HCT116 (cell line): ENCODE measurements at regions of chr3 and their contacts with region 1.

Region 1: GRCh38 chr3:195271116-195271858 is at the start of gene XXYLT1:
- DNase-seq: peak; percentile 74
- ATAC-seq: peak; percentile 81
- H3K4me3 ChIP-seq: peak within 1 kb of the TSS; percentile 63 to 74
- H3K27ac ChIP-seq: peak within 1 kb of the TSS; percentile 77
- H3K4me1 ChIP-seq: peaks cover 12 to 25% of the 10 kb centered on the region in 2 experiments
- H3K27me3 ChIP-seq: no peaks in the 10 kb centered on the region
- CTCF ChIP-seq: peak; percentile 87 to 100 (median 93)
- POLR2A ChIP-seq: no peak
- RAD21 ChIP-seq: peak; percentile 100
- total RNA-seq, gene XXYLT1: 10.9 TPM

Region 2: DNA sequence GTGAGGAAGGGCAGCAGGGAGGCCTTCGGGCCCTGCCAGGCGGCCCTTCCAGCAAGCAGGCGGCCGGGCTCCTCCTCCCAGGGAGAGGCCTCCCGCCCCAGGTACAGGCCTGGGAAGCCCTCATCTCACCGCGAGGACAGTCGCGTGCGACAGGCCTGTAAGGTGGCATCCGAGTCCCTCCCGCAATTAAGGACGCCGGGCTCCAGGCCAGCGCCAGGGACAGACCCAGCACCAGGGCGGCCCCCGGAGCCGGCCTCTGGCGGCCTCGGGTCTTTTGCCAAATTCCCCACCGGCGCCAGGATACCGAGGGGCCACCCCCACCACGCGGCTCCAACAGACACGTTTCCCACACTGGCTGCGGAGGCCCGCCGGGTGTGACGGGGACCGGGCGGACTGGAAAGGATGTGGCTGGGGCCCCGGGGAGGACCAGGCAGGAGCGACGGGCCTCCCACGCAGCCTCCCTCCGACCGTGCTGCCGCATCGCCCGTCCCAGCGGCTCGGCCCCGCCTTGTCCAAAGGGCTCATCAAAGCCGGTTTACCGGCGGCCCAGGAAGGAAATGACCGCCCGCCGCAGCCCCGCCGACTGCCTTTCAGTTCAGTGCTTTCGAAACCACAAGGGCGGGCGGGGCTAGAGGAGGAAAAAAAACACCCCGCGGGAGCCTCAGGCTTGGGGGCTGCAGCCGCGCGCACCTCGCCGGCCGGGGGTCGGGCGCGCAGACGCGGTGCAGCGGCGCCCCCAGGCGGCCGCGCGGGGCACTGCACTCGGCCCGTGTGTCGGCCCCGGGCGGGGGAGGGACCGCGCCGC is 11.6 kb before region 1 on chr3:
- CTCF ChIA-PET with region 1: interaction called, 18 read pairs
- POLR2A ChIA-PET with region 1: interaction called, 3 read pairs
- RAD21 ChIA-PET with region 1: no interaction called
- intact Hi-C with region 1: no loop called
- DNase-seq: peak; percentile 63
- ATAC-seq: peak; percentile 76
- H3K4me3 ChIP-seq: peak overlapping the region; percentile 51 to 66
- H3K27ac ChIP-seq: peak overlapping the region; percentile 92
- H3K4me1 ChIP-seq: peaks cover 19 to 28% of the 10 kb centered on the region in 2 experiments
- H3K27me3 ChIP-seq: no peaks in the 10 kb centered on the region
- CTCF ChIP-seq: peak in 2 of 3 experiments; percentile 28 to 37; a peak in 4 of 6 replicates
- POLR2A ChIP-seq: no peak
- RAD21 ChIP-seq: peak; percentile 51

Region 3: GRCh38 chr3:195442573-195443390 is 171.5 kb after region 1 on chr3 and contains the start of gene ACAP2:
- CTCF ChIA-PET with region 1: interaction called, 7 read pairs
- POLR2A ChIA-PET with region 1: interaction called, 4 read pairs
- RAD21 ChIA-PET with region 1: interaction called in 1 of 2 experiments, 3 read pairs
- intact Hi-C with region 1: loop called (anchors 5 kb)
- DNase-seq: peak; percentile 97
- ATAC-seq: peak; percentile 93
- H3K4me3 ChIP-seq: peak within 1 kb of the TSS; percentile 80 to 86
- H3K27ac ChIP-seq: peak within 1 kb of the TSS; percentile 86
- H3K4me1 ChIP-seq: peaks cover 24 to 36% of the 10 kb centered on the region in 2 experiments
- H3K27me3 ChIP-seq: no peaks in the 10 kb centered on the region
- CTCF ChIP-seq: no peak
- POLR2A ChIP-seq: peak; percentile 50
- RAD21 ChIP-seq: no peak; the same call in 1 of the 2 replicates
- total RNA-seq, gene ACAP2: 43.0 TPM

Region 4: DNA sequence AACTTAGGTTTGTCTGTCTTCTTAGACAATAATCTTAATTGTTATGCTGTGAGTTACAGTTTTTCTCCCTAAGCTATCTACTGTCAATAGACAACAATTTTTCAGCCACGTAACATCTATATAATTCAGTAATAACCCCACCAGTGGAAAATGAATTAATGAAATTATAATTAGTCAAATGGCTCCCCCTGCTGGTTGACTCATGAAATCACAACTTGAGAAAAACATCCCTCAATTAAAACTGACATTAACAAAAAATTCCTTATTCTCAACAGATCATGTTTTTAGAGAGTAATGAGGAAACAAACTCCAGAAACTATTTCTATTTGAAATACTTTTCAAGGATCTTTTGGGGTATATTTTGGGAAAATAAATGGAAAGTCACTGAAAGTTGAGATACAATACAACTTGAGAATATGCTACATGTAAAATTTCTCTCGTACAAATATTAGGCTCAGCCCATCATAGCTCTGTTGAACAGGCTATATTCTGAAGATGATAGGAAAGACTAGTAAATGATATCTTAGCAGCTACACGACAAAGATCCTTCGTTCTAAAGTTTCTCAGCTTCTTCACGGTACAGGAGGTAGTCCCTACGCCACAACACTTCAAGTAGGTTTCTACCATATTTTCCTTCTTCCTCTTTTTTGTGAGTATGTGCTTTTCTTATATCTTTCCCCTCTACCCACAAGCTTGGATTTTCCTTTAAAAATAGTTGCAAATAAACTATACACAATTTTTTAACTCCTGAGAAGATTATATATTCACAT is 251.2 kb after region 1 on chr3:
- CTCF ChIA-PET with region 1: interaction called, 142 read pairs
- POLR2A ChIA-PET with region 1: interaction called, 6 read pairs
- RAD21 ChIA-PET with region 1: interaction called, 3 to 4 read pairs
- intact Hi-C with region 1: loop called (anchors 1 kb)
- DNase-seq: no peak
- ATAC-seq: 0 out of 2 replicates have a peak, but pooled peaks have one; percentile 25
- H3K4me3 ChIP-seq: no peak overlapping the region
- H3K27ac ChIP-seq: no peak overlapping the region
- H3K4me1 ChIP-seq: no peaks in the 10 kb centered on the region
- H3K27me3 ChIP-seq: no peaks in the 10 kb centered on the region
- CTCF ChIP-seq: peak; percentile 35 to 96 (median 82); a peak in 5 of 6 replicates
- POLR2A ChIP-seq: no peak
- RAD21 ChIP-seq: peak; percentile 93

Region 5: DNA sequence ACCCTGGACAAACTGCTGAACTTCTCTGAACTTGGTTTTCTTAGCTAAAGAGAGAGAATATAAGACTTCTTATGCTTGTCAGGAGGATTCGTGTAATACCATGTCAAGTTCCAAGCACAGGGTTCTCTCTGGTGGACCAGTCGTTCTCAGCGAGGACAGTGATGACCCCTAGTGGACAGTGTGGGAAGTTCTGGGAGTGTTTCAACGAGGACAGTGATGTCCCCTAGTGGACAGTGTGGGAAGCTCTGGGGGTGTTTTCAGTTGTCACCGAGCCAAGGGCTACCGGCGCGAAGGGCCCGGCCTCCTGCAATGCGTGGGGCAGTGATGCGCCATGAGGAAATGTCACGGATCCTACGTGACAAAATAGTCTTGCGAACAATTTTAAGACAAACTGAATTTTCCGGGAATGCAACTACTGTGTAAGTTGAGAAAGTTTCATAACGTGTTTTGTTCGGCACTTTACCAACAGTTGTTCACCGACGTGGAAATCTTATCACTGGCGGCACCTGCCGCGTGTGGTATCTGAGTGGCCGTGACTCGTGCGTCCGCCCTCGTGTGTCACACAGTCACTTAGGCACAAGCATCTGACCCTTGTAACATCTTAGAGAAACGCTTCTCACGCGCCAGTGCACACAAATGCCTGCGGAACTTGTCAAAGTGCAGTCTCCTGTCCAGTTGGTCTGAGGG is 579.7 kb after region 1 on chr3:
- CTCF ChIA-PET with region 1: interaction called, 3 read pairs
- POLR2A ChIA-PET with region 1: no interaction called
- RAD21 ChIA-PET with region 1: no interaction called
- intact Hi-C with region 1: loop called (anchors 2 kb)
- DNase-seq: peak; percentile 89
- ATAC-seq: peak; percentile 68
- H3K4me3 ChIP-seq: no peak overlapping the region
- H3K27ac ChIP-seq: no peak overlapping the region
- H3K4me1 ChIP-seq: peaks cover 12 to 21% of the 10 kb centered on the region in 2 experiments
- H3K27me3 ChIP-seq: no peaks in the 10 kb centered on the region
- CTCF ChIP-seq: peak; percentile 100
- POLR2A ChIP-seq: no peak
- RAD21 ChIP-seq: peak; percentile 100